ENCODE measurements at regions of chr2 and their contacts with region 1.

Region 1: DNA sequence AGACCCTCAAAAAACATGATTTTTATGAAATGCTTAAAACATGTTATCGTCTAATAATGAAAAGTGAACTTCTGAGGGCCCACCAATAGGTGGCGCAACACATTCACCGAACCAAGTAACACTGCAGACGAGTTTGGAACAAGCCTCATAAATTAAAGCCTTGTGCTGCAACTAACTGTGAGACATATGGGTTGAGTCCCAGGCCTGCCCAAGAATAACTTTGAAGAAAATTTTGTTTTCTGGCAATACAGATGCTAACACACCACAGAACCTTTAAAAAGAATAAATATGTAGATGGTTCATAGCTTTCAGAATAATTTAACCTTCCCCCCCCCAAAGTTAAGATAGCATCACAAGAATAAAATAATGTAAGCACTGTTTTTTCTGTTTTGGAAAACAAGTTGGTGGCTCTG is 285.8 kb downstream of the RNF144A start:
- DNase-seq: peak; percentile 24
- ATAC-seq: peak; percentile 71
- H3K4me3 ChIP-seq: no peak overlapping the region
- H3K27ac ChIP-seq: no peak overlapping the region
- H3K4me1 ChIP-seq: no peaks in the 10 kb centered on the region
- H3K27me3 ChIP-seq: no peaks in the 10 kb centered on the region
- CTCF ChIP-seq: peak; percentile 52 to 96 (median 77); a peak in 5 of 6 replicates
- POLR2A ChIP-seq: no peak
- RAD21 ChIP-seq: peak; percentile 73

Region 2: DNA sequence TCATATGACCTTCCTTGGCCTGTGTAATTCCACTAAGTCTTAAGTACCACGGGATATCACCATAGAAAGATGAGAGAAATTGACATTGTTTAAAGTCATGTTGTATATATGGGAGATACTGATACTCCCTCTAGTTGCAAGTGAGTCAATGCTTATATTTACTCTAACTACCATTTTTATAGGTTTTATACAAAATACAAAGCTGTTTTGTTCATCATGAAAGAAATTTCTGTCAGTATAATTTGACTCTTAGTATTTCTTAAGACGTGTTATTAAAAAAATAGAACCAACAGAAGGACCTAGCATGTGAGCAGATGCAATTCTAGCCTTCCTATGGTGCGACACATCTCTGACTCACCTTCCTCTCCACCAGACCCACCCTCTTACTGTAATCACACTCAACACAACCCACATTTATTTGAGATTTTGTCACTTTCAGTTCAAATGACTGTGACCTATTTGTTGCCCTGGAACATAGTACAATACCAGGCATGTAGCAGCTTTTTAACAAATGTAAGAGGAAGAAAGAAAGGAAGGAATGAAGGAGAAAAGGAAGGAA is 790.4 kb before region 1 on chr2:
- CTCF ChIA-PET with region 1: no interaction called
- POLR2A ChIA-PET with region 1: no interaction called
- RAD21 ChIA-PET with region 1: no interaction called
- intact Hi-C with region 1: no loop called
- DNase-seq: no peak
- ATAC-seq: no peak
- H3K4me3 ChIP-seq: no peak overlapping the region
- H3K27ac ChIP-seq: no peak overlapping the region
- H3K4me1 ChIP-seq: no peaks in the 10 kb centered on the region
- H3K27me3 ChIP-seq: no peaks in the 10 kb centered on the region
- CTCF ChIP-seq: no peak
- POLR2A ChIP-seq: no peak
- RAD21 ChIP-seq: no peak

Region 3: DNA sequence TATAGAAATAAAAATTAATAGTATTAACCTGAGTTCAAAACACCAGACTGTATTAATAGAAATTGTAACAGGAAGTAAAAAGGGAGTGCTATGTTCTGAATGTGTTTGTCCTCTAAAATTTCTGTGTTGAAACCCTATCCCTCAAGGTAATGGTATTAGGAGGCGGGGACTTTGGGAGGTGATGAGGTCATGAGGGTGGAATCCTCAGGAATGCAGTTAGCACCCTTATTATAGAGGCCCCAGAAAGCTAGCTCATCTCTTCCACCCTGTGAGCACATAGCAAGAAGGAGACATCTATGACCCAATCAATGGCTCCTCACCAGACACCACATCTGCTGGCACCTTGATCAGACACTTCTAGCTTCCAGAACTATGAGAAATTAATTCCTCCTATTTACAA is 461.8 kb before region 1 on chr2:
- CTCF ChIA-PET with region 1: no interaction called
- POLR2A ChIA-PET with region 1: no interaction called
- RAD21 ChIA-PET with region 1: no interaction called
- intact Hi-C with region 1: no loop called
- DNase-seq: no peak
- ATAC-seq: no peak
- H3K4me3 ChIP-seq: no peak overlapping the region
- H3K27ac ChIP-seq: no peak overlapping the region
- H3K4me1 ChIP-seq: no peaks in the 10 kb centered on the region
- H3K27me3 ChIP-seq: no peaks in the 10 kb centered on the region
- CTCF ChIP-seq: no peak
- POLR2A ChIP-seq: no peak
- RAD21 ChIP-seq: no peak

Region 4: DNA sequence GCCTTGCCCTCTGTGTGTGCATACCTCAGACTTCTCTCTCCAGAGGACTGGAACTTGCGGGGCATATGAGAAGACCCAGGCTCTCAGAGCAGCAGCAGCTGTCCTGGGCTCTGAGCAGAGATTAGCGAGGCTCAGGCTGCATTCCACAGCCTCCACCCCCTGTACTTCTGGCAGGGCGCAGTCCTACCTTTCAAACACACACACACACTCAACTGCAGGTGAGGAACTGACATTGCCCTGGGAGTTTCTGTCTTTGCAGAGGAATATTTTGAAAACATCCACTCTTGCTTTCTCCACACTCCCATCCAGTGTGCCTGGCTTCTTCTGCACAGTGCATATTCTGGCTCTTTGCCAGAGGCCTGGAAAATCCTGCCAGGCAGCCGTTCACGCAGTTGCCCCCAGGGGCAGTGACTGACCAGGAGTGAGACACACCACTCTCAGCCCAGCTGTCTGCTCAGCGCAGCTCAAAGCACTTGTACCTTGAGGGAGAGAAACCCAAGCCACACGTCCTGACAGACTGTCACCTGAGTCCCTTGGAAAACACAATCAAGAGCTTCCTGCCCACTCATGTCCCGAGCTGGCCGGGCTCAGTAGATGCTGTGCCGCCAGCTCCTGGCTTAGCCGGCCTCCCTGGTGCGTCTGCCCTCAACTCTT is 175.0 kb after region 1 on chr2:
- CTCF ChIA-PET with region 1: no interaction called
- POLR2A ChIA-PET with region 1: no interaction called
- RAD21 ChIA-PET with region 1: no interaction called
- intact Hi-C with region 1: loop called (anchors 2 kb)
- DNase-seq: no peak
- ATAC-seq: no peak
- H3K4me3 ChIP-seq: no peak overlapping the region
- H3K27ac ChIP-seq: no peak overlapping the region
- H3K4me1 ChIP-seq: no peaks in the 10 kb centered on the region
- H3K27me3 ChIP-seq: peaks cover 7% of the 10 kb centered on the region; the same call in 1 of the 2 replicates
- CTCF ChIP-seq: peak in 2 of 3 experiments; percentile 6 to 10; a peak in 1 of 6 replicates
- POLR2A ChIP-seq: no peak
- RAD21 ChIP-seq: no peak

Region 5: DNA sequence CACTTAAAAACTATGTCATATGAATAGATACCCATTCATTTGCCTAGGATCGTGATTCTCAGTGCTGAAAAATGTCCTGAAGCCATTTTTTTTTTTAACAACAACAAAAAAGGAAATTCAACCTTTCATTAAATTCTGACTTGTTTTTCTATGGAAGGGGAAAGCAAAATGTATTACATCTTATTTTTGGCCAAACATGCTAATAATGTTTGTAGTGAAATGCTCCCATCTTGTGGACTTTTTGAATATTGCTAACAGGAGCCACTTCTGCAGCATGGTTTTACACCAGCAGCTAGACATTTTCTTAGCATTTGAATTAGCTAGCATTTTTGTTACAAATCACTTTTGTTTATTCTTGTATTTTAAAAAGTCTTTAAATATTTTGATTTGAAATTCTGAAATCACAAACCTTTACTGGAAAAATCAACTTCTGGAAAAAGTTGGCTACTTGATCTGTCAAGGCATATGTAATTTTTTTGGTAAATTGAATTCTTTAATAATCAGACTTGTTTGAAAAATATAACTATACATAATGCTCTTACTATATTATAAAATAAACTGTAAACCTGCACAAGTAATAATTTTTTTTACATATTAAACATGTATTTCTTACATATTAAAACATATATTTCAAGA is 1558.6 kb after region 1 on chr2:
- CTCF ChIA-PET with region 1: no interaction called
- POLR2A ChIA-PET with region 1: no interaction called
- RAD21 ChIA-PET with region 1: no interaction called
- intact Hi-C with region 1: loop called (anchors 5 kb)
- DNase-seq: peak; percentile 23
- ATAC-seq: no peak
- H3K4me3 ChIP-seq: no peak overlapping the region
- H3K27ac ChIP-seq: no peak overlapping the region
- H3K4me1 ChIP-seq: no peaks in the 10 kb centered on the region; a peak in 1 of 4 replicates
- H3K27me3 ChIP-seq: no peaks in the 10 kb centered on the region
- CTCF ChIP-seq: peak; percentile 32 to 62 (median 43); a peak in 4 of 6 replicates
- POLR2A ChIP-seq: no peak
- RAD21 ChIP-seq: peak; percentile 68